ENCODE measurements at regions of chr22 and their contacts with region 1.

Region 1: GRCh38 chr22:50082961-50083461 is 2.2 kb downstream of the MLC1 start:
- DNase-seq: peak; percentile 49
- H3K4me3 ChIP-seq: peak overlapping the region in 2 of 3 experiments; percentile 21 to 25
- H3K27ac ChIP-seq: no peak overlapping the region
- H3K4me1 ChIP-seq: peaks cover 13% of the 10 kb centered on the region
- H3K27me3 ChIP-seq: no peaks in the 10 kb centered on the region
- CTCF ChIP-seq: no peak

Region 2: DNA sequence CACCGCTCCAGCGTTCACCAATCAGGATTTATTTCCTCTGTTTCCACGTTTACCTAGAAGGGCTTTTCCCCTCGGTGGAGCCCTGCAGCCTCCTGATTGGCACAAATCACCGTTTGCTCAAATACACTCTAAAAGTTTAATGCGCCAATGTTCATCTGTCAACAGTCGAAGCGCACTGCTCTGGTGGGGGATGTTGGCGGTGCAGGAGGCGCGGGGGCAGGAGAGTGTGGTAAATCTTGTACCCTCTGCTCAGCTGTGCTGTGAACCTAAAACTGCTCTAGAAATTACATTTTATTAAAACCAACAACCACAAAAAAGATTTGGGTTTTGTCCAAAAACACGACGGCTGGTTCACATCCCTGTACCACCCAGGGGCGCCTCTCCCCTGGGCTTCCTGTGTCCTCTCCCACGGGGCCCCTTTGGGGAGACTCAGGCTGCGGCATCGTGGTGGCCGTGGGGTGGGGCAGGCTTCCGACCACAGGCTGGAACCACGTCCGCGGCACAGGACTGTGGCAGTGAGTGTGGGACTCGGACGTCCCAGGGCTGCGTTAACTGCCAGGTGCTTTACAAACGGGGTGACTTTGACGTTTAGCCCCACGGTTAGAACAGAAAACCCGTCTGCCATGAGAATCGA is 38.4 kb before region 1 on chr22:
- CTCF ChIA-PET with region 1: no interaction called
- dilution Hi-C with region 1: loop called (anchors 5 kb)
- in situ Hi-C with region 1: no loop called
- intact Hi-C with region 1: no loop called
- DNase-seq: no peak
- H3K4me3 ChIP-seq: no peak overlapping the region
- H3K27ac ChIP-seq: no peak overlapping the region
- H3K4me1 ChIP-seq: no peaks in the 10 kb centered on the region
- H3K27me3 ChIP-seq: no peaks in the 10 kb centered on the region
- CTCF ChIP-seq: no peak

Region 3: GRCh38 chr22:50129121-50129736 is 46.2 kb after region 1 on chr22:
- CTCF ChIA-PET with region 1: no interaction called
- dilution Hi-C with region 1: loop called (anchors 5 kb)
- in situ Hi-C with region 1: no loop called
- intact Hi-C with region 1: no loop called
- DNase-seq: no peak
- H3K4me3 ChIP-seq: no peak overlapping the region
- H3K27ac ChIP-seq: no peak overlapping the region
- H3K4me1 ChIP-seq: no peaks in the 10 kb centered on the region
- H3K27me3 ChIP-seq: no peaks in the 10 kb centered on the region
- CTCF ChIP-seq: no peak